ENCODE measurements at regions of chr4 and their contacts with region 1.

Region 1: GRCh38 chr4:118835571-118836300 is at the start of gene SEC24D:
- DNase-seq: peak; percentile 94
- H3K4me3 ChIP-seq: peak within 1 kb of the TSS; percentile 80 to 98 (median 98)
- H3K27ac ChIP-seq: peak within 1 kb of the TSS; percentile 96 to 99 (median 98)
- H3K4me1 ChIP-seq: peaks cover 16 to 49% (median 48%) of the 10 kb centered on the region in 4 donors
- H3K27me3 ChIP-seq: no peaks in the 10 kb centered on the region
- CTCF ChIP-seq: peak in 2 of 3 experiments; percentile 5 to 8
- EP300 ChIP-seq: no peak
- POLR2A ChIP-seq: peak; percentile 45
- total RNA-seq, gene SEC24D: 29.1 to 41.5 (median 37.0) TPM

Region 2: DNA sequence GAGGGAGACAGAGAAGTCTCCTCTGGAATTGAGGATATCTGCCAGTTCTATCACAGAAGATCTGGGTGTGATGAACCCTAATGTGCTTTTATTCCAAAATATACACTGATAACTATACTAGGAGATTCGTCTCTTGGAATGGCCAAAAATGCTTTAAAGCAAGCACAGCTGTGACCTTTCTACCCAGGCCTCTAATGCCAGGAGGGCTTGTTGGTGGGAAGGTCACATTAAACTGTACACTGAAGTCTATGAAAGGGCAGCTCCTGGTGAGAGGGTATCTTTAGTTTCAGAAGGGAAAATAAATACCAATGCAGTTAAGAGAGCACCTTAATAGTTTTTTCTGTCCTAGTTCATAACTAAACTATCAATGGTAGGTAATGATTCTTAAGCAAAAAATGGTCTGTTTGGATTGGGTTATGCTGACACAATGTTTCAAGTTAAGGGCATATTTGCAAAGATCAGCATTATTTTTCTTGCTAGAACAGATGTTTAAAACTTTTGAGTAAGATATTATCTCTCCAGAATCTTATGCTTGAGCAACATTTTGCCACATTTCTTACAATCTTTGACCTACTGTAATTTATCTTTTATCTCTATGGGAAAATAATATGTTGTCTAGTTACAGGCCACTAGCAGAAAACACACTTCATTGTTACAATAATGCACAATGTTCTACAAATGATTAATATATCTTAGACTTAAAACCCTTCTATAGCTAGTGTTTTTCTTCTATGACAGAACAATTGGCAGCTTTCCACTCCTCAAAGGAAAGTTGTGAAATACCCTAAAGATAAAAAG is 59.4 kb before region 1 on chr4:
- intact Hi-C with region 1: loop called (anchors 5 kb)
- DNase-seq: no peak
- H3K4me3 ChIP-seq: no peak overlapping the region
- H3K27ac ChIP-seq: peak overlapping the region; percentile 40 to 91 (median 70)
- H3K4me1 ChIP-seq: peaks cover 27 to 47% (median 44%) of the 10 kb centered on the region in 4 donors
- H3K27me3 ChIP-seq: no peaks in the 10 kb centered on the region
- CTCF ChIP-seq: no peak
- EP300 ChIP-seq: no peak
- POLR2A ChIP-seq: no peak

Measured in esophagus muscularis mucosa (tissue), 4 donors.